Activated CD4-positive, alpha-beta memory T cell treated with anti-CD3 and anti-CD28 coated beads, Interleukin-2, amount 10 ng/mL, durations not matched to agents 7 days and 5 days (primary cell): ENCODE measurements at regions of chr15 and their contacts with region 1.

Region 1: DNA sequence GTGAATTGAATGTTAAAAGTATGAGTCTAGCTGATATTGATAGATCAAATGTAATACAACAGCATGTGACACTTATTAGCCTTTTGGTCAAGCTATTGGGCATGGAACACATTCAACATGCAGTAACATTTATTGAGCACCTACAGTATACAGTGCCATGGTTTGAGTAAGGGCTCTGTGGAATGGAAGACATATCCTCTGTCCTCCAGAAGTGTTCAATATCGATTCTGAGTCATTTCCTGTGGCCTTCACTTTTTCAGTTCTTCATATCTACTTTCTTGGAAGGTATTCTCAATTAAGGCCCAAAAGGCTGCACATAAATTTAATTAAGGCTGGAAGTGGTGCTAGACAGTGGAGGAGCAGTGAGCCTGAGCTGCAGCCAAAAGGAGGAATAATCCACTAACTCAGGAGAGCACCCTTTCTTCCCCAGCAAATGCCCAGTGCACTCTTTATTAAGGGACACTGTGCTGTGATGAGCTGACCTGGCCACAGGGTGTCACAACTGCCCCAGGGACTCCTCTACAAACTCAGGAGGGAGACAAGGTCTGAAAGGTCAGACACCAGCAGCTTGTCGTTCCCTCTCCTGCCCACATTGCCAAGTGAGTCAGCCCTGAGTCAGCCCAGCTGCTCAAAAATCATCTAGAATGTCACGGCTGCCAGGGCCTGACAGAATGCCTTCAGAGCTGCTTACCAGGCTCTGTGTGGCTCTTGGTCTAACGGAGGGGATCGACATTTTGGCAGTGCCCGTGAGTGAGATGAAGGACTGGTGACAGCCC is 544.8 kb downstream of the AGBL1 start:
- DNase-seq: peak; percentile 74
- H3K4me3 Mint-ChIP-seq: no peak overlapping the region
- H3K27ac Mint-ChIP-seq: no peak overlapping the region
- H3K4me1 Mint-ChIP-seq: peaks cover 19% of the 10 kb centered on the region
- H3K27me3 Mint-ChIP-seq: peaks cover 4% of the 10 kb centered on the region

Region 2: GRCh38 chr15:86743283-86743903 is 118.9 kb after region 1 on chr15:
- CTCF ChIA-PET with region 1: interaction called, 35 read pairs
- POLR2A ChIA-PET with region 1: no interaction called
- DNase-seq: peak; percentile 44
- H3K4me3 Mint-ChIP-seq: no peak overlapping the region
- H3K27ac Mint-ChIP-seq: no peak overlapping the region
- H3K4me1 Mint-ChIP-seq: no peaks in the 10 kb centered on the region
- H3K27me3 Mint-ChIP-seq: no peaks in the 10 kb centered on the region